Left colon (tissue), 2 donors: ENCODE measurements at regions of chr12 and their contacts with region 1.

Region 1: DNA sequence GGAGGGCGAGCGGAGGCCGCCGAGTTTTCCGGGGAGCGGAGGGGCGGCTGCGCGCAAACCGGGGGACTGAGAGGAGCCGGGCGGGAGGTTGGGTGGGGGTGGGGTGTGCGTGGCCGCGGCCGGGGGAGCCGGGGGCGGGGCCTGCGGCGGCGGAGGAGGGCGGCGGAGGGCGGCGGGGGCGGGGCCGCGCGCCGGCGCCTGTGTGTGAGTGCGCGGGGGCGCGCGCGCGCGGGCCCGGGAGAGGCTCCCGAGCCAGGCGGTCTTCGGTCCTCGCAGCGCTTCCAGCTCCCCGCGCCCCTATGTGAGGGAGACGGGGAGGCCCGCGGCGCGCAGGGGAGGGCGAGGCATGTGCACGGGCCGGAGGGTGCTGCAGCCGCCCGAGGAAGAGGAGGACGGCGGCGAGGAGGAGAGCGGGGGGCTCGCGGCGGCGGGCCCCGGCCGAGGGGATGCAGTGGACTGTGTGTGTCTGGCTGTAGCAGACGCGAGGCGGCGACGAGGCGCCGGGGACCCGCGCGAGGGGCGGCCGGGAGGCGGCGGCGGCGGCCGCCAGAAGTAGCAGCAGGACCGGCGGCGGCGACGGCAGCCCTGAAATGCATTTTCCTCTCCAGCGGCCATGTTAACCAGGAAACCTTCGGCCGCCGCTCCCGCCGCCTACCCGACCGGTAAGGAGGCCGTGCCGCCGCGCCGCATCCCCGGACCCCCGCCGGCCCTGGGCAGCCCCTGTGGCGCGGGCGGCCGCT is at the start of gene DYRK2:
- DNase-seq: peak; percentile 77 to 89
- ATAC-seq: peak; percentile 56
- total RNA-seq, gene DYRK2: 98.5 to 144 TPM

Region 2: DNA sequence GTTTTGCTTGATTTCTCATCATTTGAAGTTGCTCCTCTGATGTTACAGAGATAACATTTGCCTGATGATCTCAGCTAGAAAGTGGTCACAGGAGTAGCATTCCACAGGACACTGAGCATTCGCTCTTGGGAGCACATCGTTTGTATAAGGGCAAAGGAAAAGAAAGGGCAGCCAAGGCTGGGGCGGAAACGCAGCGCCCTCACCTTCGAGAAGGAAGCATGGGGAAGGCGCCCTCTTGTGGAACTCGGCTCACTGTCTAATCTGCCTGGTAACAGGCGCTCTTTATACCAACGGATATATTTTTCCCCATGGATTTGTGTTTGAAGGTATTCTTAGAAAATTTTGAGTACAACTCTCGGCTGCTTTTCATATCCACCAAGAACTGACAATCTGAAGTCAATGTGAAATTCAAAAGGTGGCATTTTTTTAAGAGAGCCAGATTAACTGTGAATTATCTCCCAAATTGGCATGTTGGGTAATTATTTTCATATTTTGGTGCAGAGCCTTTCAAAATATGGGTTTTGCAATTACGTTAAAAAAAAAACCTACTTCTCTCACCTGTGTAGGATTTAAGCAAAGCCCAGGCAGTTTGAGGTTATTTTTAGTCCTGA is 206.8 kb before region 1 on chr12:
- intact Hi-C with region 1: loop called in 1 of 2 experiments (anchors 10 kb)
- DNase-seq: peak; percentile 84 to 97
- ATAC-seq: peak; percentile 97

Region 3: DNA sequence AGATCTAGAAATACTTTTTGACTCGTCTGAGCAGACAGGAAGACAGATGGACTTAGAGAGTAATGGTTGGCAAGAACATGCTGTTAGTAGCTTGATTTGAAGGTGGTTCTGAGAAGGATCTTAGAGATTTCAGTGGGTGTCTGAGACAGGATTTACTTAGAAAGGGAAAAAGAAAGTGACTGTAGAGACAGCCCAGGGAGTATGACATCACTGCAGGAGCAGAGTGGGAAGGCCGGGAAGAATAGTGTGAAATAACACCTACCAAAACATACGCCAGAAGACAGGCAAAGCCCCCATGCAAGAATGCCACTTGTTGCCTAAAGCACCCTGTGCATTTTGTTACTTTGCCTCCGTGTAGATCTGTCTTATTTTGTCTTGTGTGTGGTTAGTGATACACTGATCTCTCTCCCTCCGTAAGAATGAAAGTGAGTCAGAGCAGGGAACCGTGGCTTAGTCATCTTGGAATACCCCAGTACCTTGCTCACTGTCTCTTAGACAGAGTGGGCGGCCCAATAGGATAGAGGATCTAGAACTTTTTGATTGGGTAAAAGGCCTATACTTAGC is 179.2 kb after region 1 on chr12:
- intact Hi-C with region 1: loop called in 1 of 2 experiments (anchors 10 kb)
- DNase-seq: peak in 1 of 2 donors; percentile 13
- ATAC-seq: peak; percentile 88